Naive thymus-derived CD4-positive, alpha-beta T cell (primary cell): ENCODE measurements at regions of chr6 and their contacts with region 1.

Region 1: GRCh38 chr6:149863697-149864577 is at the start of gene LRP11:
- DNase-seq: peak; percentile 73 to 90 (median 83)
- ATAC-seq: peak; percentile 93
- H3K4me3 ChIP-seq: peak within 1 kb of the TSS; percentile 63
- H3K4me3 Mint-ChIP-seq: peak within 1 kb of the TSS; percentile 80 to 88 (median 82)
- H3K27ac ChIP-seq: peak within 1 kb of the TSS; percentile 62
- H3K27ac Mint-ChIP-seq: peak within 1 kb of the TSS in 6 of 9 donors; percentile 24 to 82 (median 48)
- H3K4me1 ChIP-seq: peaks cover 6 to 10% of the 10 kb centered on the region in 2 donors
- H3K4me1 Mint-ChIP-seq: peaks cover 0 to 21% (median 10%) of the 10 kb centered on the region in 7 donors
- H3K27me3 ChIP-seq: no peaks in the 10 kb centered on the region
- H3K27me3 Mint-ChIP-seq: peaks cover 0 to 41% (median 8%) of the 10 kb centered on the region in 5 donors
- total RNA-seq, gene LRP11: 0.88 to 3.7 (median 2.8) TPM

Region 2: DNA sequence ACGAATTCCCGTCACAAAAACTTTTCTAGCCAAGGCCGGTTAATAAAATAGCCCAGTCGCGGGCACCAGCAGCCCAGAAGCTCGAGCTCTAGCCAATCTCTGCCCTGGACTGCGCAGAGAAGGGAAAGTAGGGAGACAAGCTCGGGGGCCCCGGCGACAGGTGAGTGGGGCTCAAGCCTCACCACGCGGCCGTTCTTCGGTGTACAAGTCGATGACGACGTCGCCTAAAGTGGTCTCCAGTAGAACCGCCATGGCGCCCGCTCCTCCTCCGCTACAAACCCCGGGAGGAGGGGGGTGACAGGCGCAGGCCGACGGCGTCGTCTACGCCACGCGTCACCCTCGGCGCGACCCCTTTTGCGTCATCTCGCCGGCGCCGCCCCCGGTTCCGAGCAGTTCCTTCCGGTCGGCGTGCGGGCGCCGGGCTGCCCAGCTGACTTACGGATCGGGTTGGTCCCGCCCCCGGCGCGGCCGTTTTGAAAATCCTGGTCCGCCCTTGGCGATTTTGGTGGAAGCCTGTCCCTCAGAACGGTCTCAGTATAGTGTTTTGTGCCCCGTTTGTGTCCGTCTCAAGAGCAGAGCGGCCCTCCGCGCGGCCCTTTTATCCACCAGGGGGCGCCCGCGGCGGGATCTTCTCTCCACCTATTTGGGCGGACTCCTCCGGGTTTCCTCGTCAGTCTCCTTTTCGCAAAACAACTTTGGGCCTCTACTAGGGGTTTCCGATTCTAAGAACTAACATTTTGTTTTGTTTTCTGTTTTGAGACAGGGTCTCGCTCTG is 318.0 kb before region 1 on chr6 and contains the start of gene PPIL4:
- CTCF ChIA-PET with region 1: no interaction called
- POLR2A ChIA-PET with region 1: no interaction called
- intact Hi-C with region 1: loop called in 1 of 2 experiments (anchors 1 kb)
- DNase-seq: peak; percentile 94 to 98 (median 97)
- ATAC-seq: peak; percentile 93
- H3K4me3 ChIP-seq: peak within 1 kb of the TSS; percentile 90
- H3K4me3 Mint-ChIP-seq: peak within 1 kb of the TSS; percentile 86 to 100 (median 98)
- H3K27ac ChIP-seq: peak within 1 kb of the TSS; percentile 99
- H3K27ac Mint-ChIP-seq: peak within 1 kb of the TSS; percentile 91 to 100 (median 99)
- H3K4me1 ChIP-seq: peaks cover 19 to 22% of the 10 kb centered on the region in 2 donors
- H3K4me1 Mint-ChIP-seq: peaks cover 31 to 51% (median 41%) of the 10 kb centered on the region in 7 donors
- H3K27me3 ChIP-seq: no peaks in the 10 kb centered on the region
- H3K27me3 Mint-ChIP-seq: peaks cover 0 to 15% (median 6%) of the 10 kb centered on the region in 5 donors
- total RNA-seq, gene PPIL4: 21.0 to 42.9 (median 35.7) TPM

Region 3: GRCh38 chr6:149717588-149718458 is 146.1 kb before region 1 on chr6 and contains the start of gene LATS1:
- CTCF ChIA-PET with region 1: no interaction called
- POLR2A ChIA-PET with region 1: interaction called, 3 read pairs
- intact Hi-C with region 1: loop called (anchors 1 kb)
- DNase-seq: peak; percentile 76 to 96 (median 91)
- ATAC-seq: peak; percentile 96
- H3K4me3 ChIP-seq: peak within 1 kb of the TSS; percentile 72
- H3K4me3 Mint-ChIP-seq: peak within 1 kb of the TSS; percentile 89 to 99 (median 94)
- H3K27ac ChIP-seq: peak within 1 kb of the TSS; percentile 97
- H3K27ac Mint-ChIP-seq: peak within 1 kb of the TSS; percentile 95 to 99 (median 97)
- H3K4me1 ChIP-seq: peaks cover 11 to 19% of the 10 kb centered on the region in 2 donors
- H3K4me1 Mint-ChIP-seq: peaks cover 18 to 51% (median 44%) of the 10 kb centered on the region in 7 donors
- H3K27me3 ChIP-seq: no peaks in the 10 kb centered on the region
- H3K27me3 Mint-ChIP-seq: no peaks in the 10 kb centered on the region
- total RNA-seq, gene LATS1: 33.3 to 49.5 (median 44.6) TPM

Region 4: DNA sequence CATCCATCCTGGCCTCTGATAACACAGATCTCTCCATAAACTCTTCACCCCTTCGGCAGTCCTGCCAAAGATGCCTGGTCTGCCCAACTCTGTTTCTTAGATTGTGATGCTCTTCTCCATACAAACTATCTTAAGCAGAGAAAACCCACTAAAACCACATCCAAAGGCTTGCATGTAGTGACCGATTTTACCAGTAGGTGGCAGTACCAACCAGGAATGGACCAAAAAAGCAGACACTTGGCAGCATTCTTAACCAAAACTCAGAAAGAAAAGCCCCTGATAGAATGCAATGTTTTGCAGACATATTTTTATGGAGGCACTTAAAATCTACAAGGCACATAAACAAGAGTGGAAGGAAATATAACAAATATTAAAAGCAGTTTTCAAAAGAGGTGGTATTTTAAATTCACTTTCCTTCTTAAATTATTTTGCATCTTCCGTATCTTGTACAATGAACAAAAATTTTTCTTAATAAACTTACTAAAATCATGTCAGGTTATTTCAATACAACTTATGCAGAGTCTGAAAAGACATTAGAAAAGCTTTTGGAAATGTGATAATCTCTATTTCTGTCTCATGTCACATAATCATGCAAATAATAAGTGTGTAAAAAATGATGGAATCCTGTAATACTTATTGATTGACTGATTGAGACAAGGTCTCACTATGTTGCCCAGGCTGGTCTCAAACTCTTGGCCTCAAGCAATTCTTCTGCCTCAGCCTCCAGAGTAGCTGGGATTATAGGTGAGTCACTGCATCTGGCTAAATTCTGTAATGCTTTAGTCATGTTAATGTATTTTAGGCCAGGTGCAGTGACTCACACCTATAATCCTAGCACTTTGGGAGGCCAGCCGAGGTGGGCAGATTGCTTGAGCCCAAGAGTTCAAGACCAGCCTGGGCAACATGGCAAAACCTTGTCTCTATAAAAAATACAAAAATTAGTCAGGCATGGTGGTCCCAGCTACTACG is 29.1 kb before region 1 on chr6:
- CTCF ChIA-PET with region 1: interaction called, 11 read pairs
- POLR2A ChIA-PET with region 1: no interaction called
- intact Hi-C with region 1: loop called (anchors 1 kb)
- DNase-seq: peak; percentile 50 to 85 (median 75)
- ATAC-seq: peak; percentile 92
- H3K4me3 ChIP-seq: no peak overlapping the region
- H3K4me3 Mint-ChIP-seq: no peak overlapping the region
- H3K27ac ChIP-seq: no peak overlapping the region
- H3K27ac Mint-ChIP-seq: no peak overlapping the region
- H3K4me1 ChIP-seq: no peaks in the 10 kb centered on the region
- H3K4me1 Mint-ChIP-seq: peaks cover 0 to 5% (median 4%) of the 10 kb centered on the region in 7 donors
- H3K27me3 ChIP-seq: no peaks in the 10 kb centered on the region
- H3K27me3 Mint-ChIP-seq: peaks cover 0 to 19% (median 4%) of the 10 kb centered on the region in 5 donors

Region 5: GRCh38 chr6:149941583-149942431 is 77.9 kb after region 1 on chr6 and contains the start of gene ULBP2:
- CTCF ChIA-PET with region 1: no interaction called
- POLR2A ChIA-PET with region 1: no interaction called
- intact Hi-C with region 1: loop called in 1 of 2 experiments (anchors 5 kb)
- DNase-seq: peak; percentile 69 to 94 (median 80)
- ATAC-seq: peak; percentile 94
- H3K4me3 ChIP-seq: peak within 1 kb of the TSS; percentile 58
- H3K4me3 Mint-ChIP-seq: peak within 1 kb of the TSS; percentile 78 to 96 (median 94)
- H3K27ac ChIP-seq: peak within 1 kb of the TSS; percentile 9
- H3K27ac Mint-ChIP-seq: peak within 1 kb of the TSS; percentile 74 to 91 (median 85)
- H3K4me1 ChIP-seq: peaks cover 14 to 20% of the 10 kb centered on the region in 2 donors
- H3K4me1 Mint-ChIP-seq: peaks cover 13 to 40% (median 31%) of the 10 kb centered on the region in 7 donors
- H3K27me3 ChIP-seq: peaks cover 25 to 35% of the 10 kb centered on the region in 2 donors
- H3K27me3 Mint-ChIP-seq: peaks cover 31 to 82% (median 44%) of the 10 kb centered on the region in 5 donors
- total RNA-seq, gene ULBP2: 0.27 to 1.0 (median 0.65) TPM in 4 of 5 experiments, not detected in the other

Region 6: DNA sequence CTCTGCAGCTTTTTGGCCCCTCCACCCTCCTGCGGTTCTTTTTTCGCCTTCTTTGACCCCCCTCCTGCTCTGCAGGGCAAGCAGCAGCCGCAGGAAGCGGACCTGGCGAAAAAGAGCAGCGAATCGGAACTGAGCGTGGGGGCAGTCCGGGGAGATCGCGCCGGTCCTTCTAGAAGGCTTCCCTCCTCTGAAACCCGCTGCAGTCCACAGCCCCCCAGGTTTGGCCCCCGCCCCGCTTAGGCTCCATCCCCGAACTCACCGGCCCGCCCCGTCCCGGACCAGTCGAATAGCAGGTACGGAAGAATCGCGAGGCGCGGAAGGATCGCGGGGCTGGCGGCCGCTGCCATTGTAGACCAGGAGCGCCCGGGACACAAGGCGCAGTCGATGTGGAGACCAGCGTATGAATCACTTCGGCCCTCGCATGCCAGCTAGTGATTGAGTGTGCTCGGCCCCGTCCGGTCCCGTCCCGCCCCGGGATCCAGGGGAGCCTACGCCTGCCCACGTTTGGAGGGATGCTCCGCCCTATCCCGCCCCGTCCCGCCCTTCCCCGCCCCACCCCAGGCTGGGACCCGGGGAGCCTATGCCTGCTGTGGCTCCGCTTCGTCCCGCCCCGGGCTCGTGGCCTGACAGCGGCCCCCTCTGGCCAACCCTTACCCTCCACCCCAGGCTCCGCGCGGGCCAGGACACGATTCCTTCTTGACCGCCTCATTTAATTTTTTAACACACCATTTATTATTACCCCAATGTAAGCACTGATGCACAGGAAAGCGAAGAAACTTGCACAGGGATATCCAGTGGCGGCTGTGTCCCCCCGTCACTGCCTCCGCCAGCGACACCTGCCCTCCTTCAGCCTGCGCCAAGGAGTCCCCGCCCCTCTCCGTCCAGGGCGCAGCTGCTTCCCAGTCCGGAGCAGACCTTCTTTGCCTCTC is 205.0 kb after region 1 on chr6 and contains the start of gene ULBP3:
- CTCF ChIA-PET with region 1: interaction called, 3 read pairs
- POLR2A ChIA-PET with region 1: no interaction called
- intact Hi-C with region 1: loop called in 1 of 2 experiments (anchors 2 kb)
- DNase-seq: peak; percentile 24 to 75 (median 35)
- ATAC-seq: peak; percentile 83
- H3K4me3 ChIP-seq: peak within 1 kb of the TSS; percentile 77
- H3K4me3 Mint-ChIP-seq: peak within 1 kb of the TSS; percentile 80 to 95 (median 90)
- H3K27ac ChIP-seq: no peak within 1 kb of the TSS
- H3K27ac Mint-ChIP-seq: peak within 1 kb of the TSS in 4 of 9 donors; percentile 49 to 82 (median 72)
- H3K4me1 ChIP-seq: peaks cover 0 to 5% of the 10 kb centered on the region in 2 donors
- H3K4me1 Mint-ChIP-seq: peaks cover 10 to 22% (median 14%) of the 10 kb centered on the region in 7 donors
- H3K27me3 ChIP-seq: no peaks in the 10 kb centered on the region
- H3K27me3 Mint-ChIP-seq: peaks cover 4 to 35% (median 12%) of the 10 kb centered on the region in 5 donors
- total RNA-seq, gene ULBP3: 0.42 to 1.5 TPM in 2 of 5 experiments, not detected in the others

Region 7: GRCh38 chr6:151359486-151359885 is 1495.5 kb after region 1 on chr6:
- CTCF ChIA-PET with region 1: no interaction called
- POLR2A ChIA-PET with region 1: no interaction called
- intact Hi-C with region 1: no loop called
- DNase-seq: no peak
- ATAC-seq: no peak
- H3K4me3 ChIP-seq: no peak overlapping the region
- H3K4me3 Mint-ChIP-seq: no peak overlapping the region
- H3K27ac ChIP-seq: no peak overlapping the region
- H3K27ac Mint-ChIP-seq: no peak overlapping the region
- H3K4me1 ChIP-seq: no peaks in the 10 kb centered on the region
- H3K4me1 Mint-ChIP-seq: peaks cover 0 to 13% (median 12%) of the 10 kb centered on the region in 7 donors
- H3K27me3 ChIP-seq: no peaks in the 10 kb centered on the region
- H3K27me3 Mint-ChIP-seq: no peaks in the 10 kb centered on the region